ENCODE measurements at regions of chr11 and their contacts with region 1.

Region 1: GRCh38 chr11:78139422-78140391 is at the start of gene ALG8:
- DNase-seq: peak; percentile 96 to 97
- ATAC-seq: peak; percentile 98 to 100 (median 99)
- H3K4me3 ChIP-seq: peak within 1 kb of the TSS; percentile 38 to 92 (median 72)
- H3K27ac ChIP-seq: peak within 1 kb of the TSS in 9 of 10 donors; percentile 66 to 87 (median 71)
- H3K4me1 ChIP-seq: peaks cover 0 to 39% (median 18%) of the 10 kb centered on the region in 9 donors
- H3K27me3 ChIP-seq: no peaks in the 10 kb centered on the region
- CTCF ChIP-seq: no peak
- total RNA-seq, gene ALG8: 9.6 to 19.5 (median 15.5) TPM

Region 2: GRCh38 chr11:77332259-77332658 is 807.4 kb before region 1 on chr11:
- intact Hi-C with region 1: no loop called
- DNase-seq: no peak
- ATAC-seq: no peak
- H3K4me3 ChIP-seq: no peak overlapping the region
- H3K27ac ChIP-seq: no peak overlapping the region
- H3K4me1 ChIP-seq: no peaks in the 10 kb centered on the region
- H3K27me3 ChIP-seq: no peaks in the 10 kb centered on the region
- CTCF ChIP-seq: no peak

Region 3: DNA sequence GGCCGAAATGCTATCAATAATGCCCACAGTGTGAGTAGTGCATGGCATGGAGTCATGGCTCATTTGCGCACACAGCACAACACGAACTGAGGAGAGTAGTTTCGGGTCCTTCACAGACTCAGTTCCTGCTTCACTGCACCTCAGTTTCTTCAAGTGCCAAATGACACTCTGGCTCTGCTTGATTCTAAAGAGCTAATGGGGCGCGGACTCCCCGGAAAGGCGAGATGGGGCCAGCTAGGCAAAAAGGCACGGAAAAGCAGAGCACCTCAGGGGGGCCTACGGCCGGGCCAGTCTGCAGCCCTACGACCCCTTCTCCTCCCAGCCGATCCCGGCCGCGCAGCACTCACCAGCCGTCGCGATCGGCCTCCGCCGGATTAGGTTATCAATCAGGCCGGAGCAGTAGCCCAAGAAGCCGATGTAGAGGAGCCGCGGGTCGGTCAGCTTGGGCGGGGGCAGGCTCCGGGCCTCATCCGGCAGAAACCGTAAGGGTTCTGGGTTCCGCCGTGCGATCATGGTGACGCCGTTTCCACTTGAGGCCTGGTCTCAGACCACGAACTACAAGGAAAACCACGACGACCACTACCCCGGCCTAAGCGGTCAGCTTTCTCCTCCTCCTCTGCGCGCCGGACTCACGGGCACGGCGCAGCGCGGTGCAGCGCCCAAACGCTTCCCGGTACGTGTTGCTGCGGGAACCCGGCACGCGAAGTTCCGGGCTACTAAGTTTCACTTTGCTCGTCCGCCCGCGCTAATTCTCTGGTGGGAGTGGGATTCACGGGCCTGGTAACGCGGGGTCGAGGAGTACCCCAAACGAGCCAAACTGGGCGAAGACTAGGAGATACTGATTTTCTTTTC is 60.2 kb before region 1 on chr11 and contains the start of gene NDUFC2:
- intact Hi-C with region 1: loop called in 1 of 10 experiments (anchors 2 kb)
- DNase-seq: peak; percentile 75 to 82
- ATAC-seq: peak; percentile 93 to 96 (median 95)
- H3K4me3 ChIP-seq: peak within 1 kb of the TSS; percentile 65 to 92 (median 86)
- H3K27ac ChIP-seq: peak within 1 kb of the TSS; percentile 47 to 95 (median 90)
- H3K4me1 ChIP-seq: peaks cover 6 to 52% (median 41%) of the 10 kb centered on the region in 9 donors
- H3K27me3 ChIP-seq: no peaks in the 10 kb centered on the region
- CTCF ChIP-seq: peak in 1 of 9 donors; percentile 4
- total RNA-seq, gene NDUFC2: 242 to 400 (median 275) TPM

Region 4: DNA sequence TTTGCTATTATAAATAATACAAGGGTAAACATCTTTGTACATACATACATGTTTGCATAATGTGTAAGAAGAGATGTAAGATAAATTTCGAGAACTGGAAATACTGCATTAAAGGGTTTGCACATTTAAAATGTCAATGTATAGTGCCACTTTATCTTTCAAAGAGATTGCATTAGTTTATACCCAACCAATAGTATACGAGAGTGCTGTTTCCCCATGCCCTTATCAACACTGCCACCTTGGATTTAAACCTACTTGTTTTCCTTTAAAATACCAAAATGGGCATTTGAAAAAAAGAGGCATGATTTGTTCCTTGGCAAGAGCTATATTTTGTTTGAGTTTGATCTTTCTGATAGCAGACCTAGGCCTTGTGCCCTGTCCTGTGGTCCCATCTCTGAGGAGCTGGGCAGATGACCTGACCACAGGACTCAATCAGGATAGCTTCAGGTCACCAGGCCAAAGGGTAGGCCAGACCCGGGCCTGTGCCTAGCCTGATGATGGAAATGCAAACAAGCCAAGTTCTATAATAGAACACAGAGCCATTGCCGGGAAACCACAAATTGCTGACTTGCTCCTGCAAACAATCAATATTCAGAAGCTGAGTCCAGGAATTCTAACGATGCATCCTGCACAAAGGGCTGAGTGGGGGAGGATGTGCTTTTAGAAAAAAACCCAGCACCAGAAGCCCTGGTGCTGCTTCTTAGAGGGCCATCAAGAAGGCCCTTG is 16.6 kb after region 1 on chr11:
- intact Hi-C with region 1: no loop called
- DNase-seq: no peak
- ATAC-seq: no peak
- H3K4me3 ChIP-seq: no peak overlapping the region
- H3K27ac ChIP-seq: no peak overlapping the region
- H3K4me1 ChIP-seq: peaks cover 0 to 13% (median 0%) of the 10 kb centered on the region in 9 donors
- H3K27me3 ChIP-seq: no peaks in the 10 kb centered on the region
- CTCF ChIP-seq: no peak

Region 5: GRCh38 chr11:78168539-78169477 is 29.1 kb after region 1 on chr11:
- intact Hi-C with region 1: loop called in 1 of 10 experiments (anchors 1 kb)
- DNase-seq: peak; percentile 87 to 90
- ATAC-seq: peak; percentile 91 to 95 (median 94)
- H3K4me3 ChIP-seq: no peak overlapping the region
- H3K27ac ChIP-seq: peak overlapping the region; percentile 70 to 92 (median 86)
- H3K4me1 ChIP-seq: peaks cover 14 to 45% (median 32%) of the 10 kb centered on the region in 9 donors
- H3K27me3 ChIP-seq: no peaks in the 10 kb centered on the region
- CTCF ChIP-seq: no peak

Region 6: DNA sequence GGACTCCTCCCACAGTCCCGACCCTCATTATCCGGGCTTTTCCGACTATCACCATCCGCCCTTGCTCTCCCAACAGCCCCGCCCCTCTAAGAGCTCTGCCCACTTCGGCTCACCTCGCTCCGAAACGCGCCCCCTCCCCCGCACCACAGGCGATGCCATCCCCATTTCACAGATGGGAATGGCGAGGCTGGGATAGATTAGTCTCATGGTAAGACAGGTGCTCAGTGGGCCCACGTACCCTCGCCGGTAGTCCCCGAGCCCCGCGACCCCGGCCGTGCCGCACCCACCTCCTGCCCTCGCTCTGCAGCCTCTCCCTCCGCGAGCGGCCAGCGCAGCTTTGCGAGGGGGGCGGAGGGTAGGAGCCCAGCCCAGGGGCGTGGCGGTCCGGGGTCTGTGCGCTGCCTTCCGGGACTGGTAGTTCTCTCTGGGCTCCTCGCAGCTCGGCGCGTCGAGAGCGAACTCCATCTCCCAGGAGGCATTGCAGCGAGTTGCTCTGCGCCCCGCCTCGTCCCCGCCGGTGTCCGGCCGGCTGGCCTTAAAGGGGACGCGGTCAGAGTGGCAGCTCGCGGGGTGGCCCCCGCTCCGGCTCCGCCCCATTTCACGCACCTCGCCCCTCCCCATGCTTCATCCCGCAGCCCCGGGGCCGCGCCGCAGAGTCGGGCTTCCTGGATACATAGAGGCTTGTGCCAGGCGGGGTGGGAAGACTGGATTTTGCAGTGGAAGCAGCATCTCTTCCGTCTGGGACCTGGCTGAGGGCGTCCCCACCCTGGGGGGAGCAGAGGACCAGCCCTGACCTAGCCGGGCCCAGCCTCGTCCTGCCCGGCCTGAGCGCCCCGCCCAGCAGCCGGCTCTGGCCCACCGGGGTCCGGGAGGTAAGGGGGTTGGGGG is 48.8 kb after region 1 on chr11 and contains the starts of genes KCTD21 and USP35:
- intact Hi-C with region 1: loop called in 5 of 10 experiments (anchors 2 to 5 kb)
- DNase-seq: peak; percentile 97 to 98
- ATAC-seq: peak; percentile 97 to 98 (median 98)
- H3K4me3 ChIP-seq: peak within 1 kb of the TSS; percentile 68 to 89 (median 82)
- H3K27ac ChIP-seq: peak within 1 kb of the TSS; percentile 34 to 90 (median 84)
- H3K4me1 ChIP-seq: peaks cover 6 to 59% (median 36%) of the 10 kb centered on the region in 9 donors
- H3K27me3 ChIP-seq: no peaks in the 10 kb centered on the region
- CTCF ChIP-seq: no peak
- total RNA-seq, gene KCTD21: 4.2 to 9.9 (median 6.7) TPM
- total RNA-seq, gene USP35: 3.6 to 6.6 (median 5.2) TPM

Region 7: DNA sequence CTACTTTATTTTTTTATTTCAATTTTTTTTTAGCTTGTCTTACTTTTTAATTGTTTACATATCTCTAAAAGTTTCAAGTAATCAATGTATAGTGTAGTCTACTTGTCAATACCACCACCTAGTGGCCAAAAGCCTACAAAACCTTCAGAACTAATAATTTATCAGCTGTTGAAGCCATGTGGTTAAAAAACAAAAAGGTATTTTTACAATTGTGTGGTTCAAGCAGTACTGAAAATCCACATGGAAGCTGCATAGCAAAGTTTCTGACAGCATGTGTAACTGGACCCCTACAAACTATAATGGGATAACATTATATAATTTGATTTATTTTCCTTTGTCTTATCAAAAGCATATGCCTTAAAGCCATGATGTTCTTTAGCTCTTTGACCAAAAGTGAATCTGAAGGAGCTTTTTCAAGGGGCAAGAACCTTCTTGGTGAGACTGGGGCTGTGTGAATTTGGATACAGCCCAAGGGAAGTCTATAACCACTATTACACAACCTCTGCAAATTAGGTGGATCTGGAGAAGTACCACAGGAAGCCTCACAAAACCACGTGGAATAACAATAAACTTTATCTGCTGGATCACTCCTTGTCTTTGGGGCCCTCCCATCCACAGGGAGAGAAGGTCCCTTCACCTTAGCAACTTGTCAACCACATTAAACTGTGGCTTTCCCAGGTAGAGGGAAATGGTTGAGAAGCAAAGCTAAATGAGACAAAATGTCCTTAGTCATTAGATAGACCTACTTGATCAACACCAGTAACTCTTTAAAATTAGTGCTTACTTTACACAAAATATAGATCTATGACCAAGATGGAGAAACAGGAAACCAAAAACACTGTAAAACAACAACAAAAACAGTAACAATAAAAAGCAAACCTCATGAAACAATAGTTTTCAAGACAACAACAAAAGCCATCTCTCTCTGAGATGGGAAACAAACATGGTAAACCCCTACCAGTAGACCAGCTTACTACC is 425.1 kb after region 1 on chr11:
- intact Hi-C with region 1: loop called in 4 of 10 experiments (anchors 5 to 10 kb)
- DNase-seq: peak in 1 of 2 donors; percentile 57
- ATAC-seq: peak in 6 of 8 donors; percentile 30 to 64 (median 54)
- H3K4me3 ChIP-seq: no peak overlapping the region
- H3K27ac ChIP-seq: peak overlapping the region in 1 of 10 donors; percentile 7
- H3K4me1 ChIP-seq: peaks cover 9 to 43% (median 31%) of the 10 kb centered on the region in 9 donors
- H3K27me3 ChIP-seq: no peaks in the 10 kb centered on the region
- CTCF ChIP-seq: peak; percentile 56 to 87 (median 80)

Region 8: GRCh38 chr11:78574386-78575381 is 435.0 kb after region 1 on chr11 and contains the start of gene NARS2:
- intact Hi-C with region 1: loop called in 4 of 10 experiments (anchors 10 kb)
- DNase-seq: peak; percentile 96 to 98
- ATAC-seq: peak; percentile 99 to 100 (median 100)
- H3K4me3 ChIP-seq: peak within 1 kb of the TSS; percentile 56 to 96 (median 76)
- H3K27ac ChIP-seq: peak within 1 kb of the TSS in 9 of 10 donors; percentile 68 to 87 (median 85)
- H3K4me1 ChIP-seq: peaks cover 0 to 34% (median 17%) of the 10 kb centered on the region in 9 donors
- H3K27me3 ChIP-seq: no peaks in the 10 kb centered on the region
- CTCF ChIP-seq: no peak
- total RNA-seq, gene NARS2: 14.8 to 20.1 (median 16.7) TPM

Measured in heart right ventricle (tissue), 16 donors.